ENCODE measurements at regions of chr15 and their contacts with region 1.

Region 1: DNA sequence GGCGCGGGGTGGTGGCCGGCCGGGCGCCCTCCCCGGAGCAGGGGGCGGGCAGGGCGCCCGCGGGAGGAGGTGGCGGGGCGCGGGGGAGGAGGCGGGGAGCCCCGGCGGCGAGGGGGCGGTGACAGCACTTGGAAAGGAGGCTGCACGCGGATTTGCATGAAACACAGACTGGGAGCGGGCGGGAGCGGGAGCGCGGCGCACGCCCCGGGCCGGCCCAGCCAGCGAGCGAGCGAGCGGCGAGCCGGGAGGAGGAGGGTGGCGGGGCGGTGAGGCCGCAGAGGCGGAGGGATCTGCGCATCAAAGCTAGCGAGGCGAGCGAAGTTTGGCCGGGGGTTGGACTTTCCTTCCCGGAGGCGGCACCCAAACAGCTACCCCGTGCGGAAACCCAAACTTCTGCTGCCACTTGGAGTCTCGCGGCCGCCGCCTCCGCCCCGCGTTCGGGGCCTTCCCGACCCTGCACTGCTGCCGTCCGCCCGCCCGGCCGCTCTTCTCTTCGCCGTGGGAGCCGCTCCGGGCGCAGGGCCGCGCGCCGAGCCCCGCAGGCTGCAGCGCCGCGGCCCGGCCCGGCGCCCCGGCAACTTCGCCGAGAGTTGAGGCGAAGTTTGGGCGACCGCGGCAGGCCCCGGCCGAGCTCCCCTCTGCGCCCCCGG is at the start of gene SMAD3:
- DNase-seq: peak; percentile 91
- H3K4me3 Mint-ChIP-seq: peak within 1 kb of the TSS; percentile 92
- H3K27ac Mint-ChIP-seq: peak within 1 kb of the TSS; percentile 81
- H3K4me1 Mint-ChIP-seq: peaks cover 29% of the 10 kb centered on the region
- H3K27me3 Mint-ChIP-seq: no peaks in the 10 kb centered on the region
- CTCF ChIP-seq: no peak
- total RNA-seq, gene SMAD3: 19.9 and 26.1 TPM in 2 replicates

Region 2: GRCh38 chr15:66946578-66947164 is 118.9 kb before region 1 on chr15:
- CTCF ChIA-PET with region 1: interaction called, 3 read pairs
- POLR2A ChIA-PET with region 1: interaction called, 5 read pairs
- intact Hi-C with region 1: loop called (anchors 5 kb)
- DNase-seq: peak; percentile 83
- H3K4me3 Mint-ChIP-seq: no peak overlapping the region
- H3K27ac Mint-ChIP-seq: no peak overlapping the region
- H3K4me1 Mint-ChIP-seq: peaks cover 7% of the 10 kb centered on the region
- H3K27me3 Mint-ChIP-seq: no peaks in the 10 kb centered on the region
- CTCF ChIP-seq: peak; percentile 94

Region 3: GRCh38 chr15:67048281-67049279 is 17.0 kb before region 1 on chr15:
- CTCF ChIA-PET with region 1: interaction called, 10 read pairs
- POLR2A ChIA-PET with region 1: interaction called, 62 read pairs
- intact Hi-C with region 1: no loop called
- DNase-seq: peak; percentile 88
- H3K4me3 Mint-ChIP-seq: no peak overlapping the region
- H3K27ac Mint-ChIP-seq: peak overlapping the region; percentile 94
- H3K4me1 Mint-ChIP-seq: peaks cover 45% of the 10 kb centered on the region
- H3K27me3 Mint-ChIP-seq: no peaks in the 10 kb centered on the region
- CTCF ChIP-seq: no peak

Region 4: GRCh38 chr15:67107014-67107812 is 41.6 kb after region 1 on chr15:
- CTCF ChIA-PET with region 1: no interaction called
- POLR2A ChIA-PET with region 1: interaction called, 11 read pairs
- intact Hi-C with region 1: loop called (anchors 2 kb)
- DNase-seq: peak; percentile 99
- H3K4me3 Mint-ChIP-seq: peak overlapping the region; percentile 52
- H3K27ac Mint-ChIP-seq: peak overlapping the region; percentile 98
- H3K4me1 Mint-ChIP-seq: peaks cover 40% of the 10 kb centered on the region
- H3K27me3 Mint-ChIP-seq: no peaks in the 10 kb centered on the region
- CTCF ChIP-seq: no peak

Region 5: DNA sequence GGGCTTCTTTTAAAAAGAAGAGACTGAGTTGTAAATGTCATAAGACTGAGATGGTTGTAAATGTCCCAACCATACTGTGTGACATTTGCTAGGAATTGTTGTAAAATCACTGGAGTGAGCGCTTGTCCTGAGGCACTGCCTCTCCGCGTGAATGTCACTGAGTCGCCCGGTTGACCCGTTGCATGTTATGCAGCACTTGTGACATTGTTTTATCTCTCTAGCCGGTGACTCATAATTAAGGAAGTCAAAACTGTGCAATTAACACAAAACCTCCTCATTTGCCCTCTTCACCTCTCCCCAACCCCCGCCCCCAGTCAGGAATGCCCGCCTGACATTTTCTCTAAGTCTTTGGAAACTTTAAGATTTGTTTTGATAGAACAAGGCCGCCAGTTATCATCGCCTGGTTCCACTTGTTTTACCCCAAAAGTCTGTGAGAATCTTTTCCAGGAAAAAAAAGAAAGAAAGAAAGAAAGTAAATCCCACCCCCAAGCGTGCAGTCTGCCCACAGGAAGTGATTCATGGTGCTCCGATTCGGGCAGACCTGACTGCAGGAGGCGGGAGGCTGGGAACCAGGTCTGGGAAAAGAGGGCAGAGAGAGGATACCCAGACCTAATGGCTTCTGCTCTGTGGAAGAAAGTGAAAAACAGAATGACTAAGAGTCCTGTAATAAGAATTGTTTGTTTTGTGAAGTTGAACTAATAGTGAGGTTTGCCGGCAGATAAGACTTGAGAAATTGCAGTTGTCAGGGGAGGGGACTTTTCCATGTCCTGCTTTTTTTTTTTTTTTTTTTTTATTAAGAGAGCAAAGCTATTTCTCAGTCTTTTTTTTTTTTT is 84.7 kb after region 1 on chr15:
- CTCF ChIA-PET with region 1: interaction called, 3 read pairs
- POLR2A ChIA-PET with region 1: interaction called, 10 read pairs
- intact Hi-C with region 1: no loop called
- DNase-seq: peak; percentile 97
- H3K4me3 Mint-ChIP-seq: peak overlapping the region; percentile 71
- H3K27ac Mint-ChIP-seq: peak overlapping the region; percentile 94
- H3K4me1 Mint-ChIP-seq: peaks cover 45% of the 10 kb centered on the region
- H3K27me3 Mint-ChIP-seq: no peaks in the 10 kb centered on the region
- CTCF ChIP-seq: no peak

Region 6: DNA sequence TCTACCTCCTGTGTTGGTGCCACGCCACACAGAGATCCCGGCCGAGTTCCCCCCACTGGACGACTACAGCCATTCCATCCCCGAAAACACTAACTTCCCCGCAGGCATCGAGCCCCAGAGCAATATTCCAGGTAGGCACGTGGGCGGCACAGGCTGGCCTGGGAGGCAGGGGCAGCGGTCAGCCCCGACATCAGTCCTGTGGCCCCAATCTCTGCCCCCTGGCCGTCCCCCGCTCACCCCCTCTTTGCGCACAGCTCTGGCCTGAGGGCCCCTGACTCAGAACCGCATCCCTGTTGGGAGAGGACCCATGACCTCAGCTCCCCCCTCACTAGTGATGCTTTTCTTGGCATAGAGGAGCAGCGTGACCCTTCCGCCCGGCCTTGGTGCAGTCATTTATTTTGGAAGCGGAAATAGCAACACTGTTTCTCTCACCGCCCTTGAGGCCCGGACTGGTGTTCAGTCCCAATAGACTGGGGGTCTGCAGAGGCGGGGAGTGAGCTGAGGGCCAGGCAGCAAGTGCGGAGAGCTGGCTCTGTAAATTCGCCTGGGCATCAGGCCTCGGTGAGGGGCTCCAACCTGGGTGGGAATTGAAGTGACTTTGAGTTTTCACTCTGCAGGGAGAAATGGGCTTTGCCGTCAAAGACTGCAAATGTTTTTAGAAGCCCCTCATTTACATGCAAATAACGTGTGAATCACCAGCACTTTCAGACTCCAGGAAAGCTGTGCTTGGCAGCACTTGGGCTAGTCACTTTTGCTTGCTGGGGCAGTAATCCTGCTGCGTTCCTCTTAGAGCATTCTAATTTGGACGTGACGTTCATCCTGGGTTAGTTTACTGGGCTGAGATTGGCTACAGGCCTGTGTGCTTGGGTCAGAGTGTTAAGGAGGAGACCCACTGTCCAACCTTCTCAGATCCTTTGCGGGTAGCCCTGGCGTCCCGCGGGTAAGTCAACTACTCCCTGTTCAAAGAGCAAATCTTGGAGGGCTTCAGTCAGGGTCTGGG is 100.0 kb after region 1 on chr15:
- CTCF ChIA-PET with region 1: no interaction called
- POLR2A ChIA-PET with region 1: no interaction called
- intact Hi-C with region 1: no loop called
- DNase-seq: no peak
- H3K4me3 Mint-ChIP-seq: no peak overlapping the region
- H3K27ac Mint-ChIP-seq: no peak overlapping the region
- H3K4me1 Mint-ChIP-seq: peaks cover 13% of the 10 kb centered on the region
- H3K27me3 Mint-ChIP-seq: no peaks in the 10 kb centered on the region
- CTCF ChIP-seq: no peak

Region 7: GRCh38 chr15:67189326-67190051 is 123.9 kb after region 1 on chr15:
- CTCF ChIA-PET with region 1: no interaction called
- POLR2A ChIA-PET with region 1: no interaction called
- intact Hi-C with region 1: loop called (anchors 5 kb)
- DNase-seq: no peak
- H3K4me3 Mint-ChIP-seq: no peak overlapping the region
- H3K27ac Mint-ChIP-seq: no peak overlapping the region
- H3K4me1 Mint-ChIP-seq: no peaks in the 10 kb centered on the region
- H3K27me3 Mint-ChIP-seq: no peaks in the 10 kb centered on the region
- CTCF ChIP-seq: no peak

Region 8: DNA sequence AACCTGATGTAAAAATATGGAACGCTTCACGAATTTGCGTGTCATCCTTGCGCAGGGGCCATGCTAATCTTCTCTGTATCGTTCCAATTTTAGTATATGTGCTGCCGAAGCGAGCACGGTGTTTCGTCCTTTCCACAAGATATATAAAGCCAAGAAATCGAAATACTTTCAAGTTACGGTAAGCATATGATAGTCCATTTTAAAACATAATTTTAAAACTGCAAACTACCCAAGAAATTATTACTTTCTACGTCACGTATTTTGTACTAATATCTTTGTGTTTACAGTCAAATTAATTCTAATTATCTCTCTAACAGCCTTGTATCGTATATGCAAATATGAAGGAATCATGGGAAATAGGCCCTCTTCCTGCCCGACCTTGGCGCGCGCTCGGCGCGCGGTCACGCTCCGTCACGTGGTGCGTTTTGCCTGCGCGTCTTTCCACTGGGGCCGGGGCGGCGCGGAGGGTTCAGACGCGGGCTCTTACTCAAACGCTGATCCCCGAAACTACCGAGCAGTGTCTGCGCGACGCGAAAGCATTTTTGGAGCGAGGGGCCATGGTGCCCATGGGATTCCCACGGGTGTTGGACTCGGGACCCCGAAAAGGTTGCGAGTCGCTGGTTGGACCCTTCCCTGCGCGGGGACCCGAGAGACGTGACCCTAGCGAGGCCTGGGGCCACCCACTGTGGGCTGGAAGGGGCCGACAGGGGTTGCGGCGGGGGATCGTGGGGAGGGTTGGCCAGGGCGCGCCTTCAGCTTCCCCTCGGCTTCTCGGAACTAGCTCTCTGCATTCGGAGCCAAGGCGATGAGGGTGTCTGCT is 774.6 kb after region 1 on chr15 and contains the start of gene RNU6-1:
- CTCF ChIA-PET with region 1: no interaction called
- POLR2A ChIA-PET with region 1: no interaction called
- intact Hi-C with region 1: loop called (anchors 10 kb)
- DNase-seq: peak; percentile 87
- H3K4me3 Mint-ChIP-seq: peak within 1 kb of the TSS; percentile 81
- H3K27ac Mint-ChIP-seq: peak within 1 kb of the TSS; percentile 94
- H3K4me1 Mint-ChIP-seq: no peaks in the 10 kb centered on the region
- H3K27me3 Mint-ChIP-seq: no peaks in the 10 kb centered on the region
- CTCF ChIP-seq: no peak
- total RNA-seq, gene RNU6-1: not detected in 2 replicates

Measured in MCF 10A (cell line).